Sigmoid colon (tissue), 7 donors: ENCODE measurements at regions of chr11 and their contacts with region 1.

Region 1: DNA sequence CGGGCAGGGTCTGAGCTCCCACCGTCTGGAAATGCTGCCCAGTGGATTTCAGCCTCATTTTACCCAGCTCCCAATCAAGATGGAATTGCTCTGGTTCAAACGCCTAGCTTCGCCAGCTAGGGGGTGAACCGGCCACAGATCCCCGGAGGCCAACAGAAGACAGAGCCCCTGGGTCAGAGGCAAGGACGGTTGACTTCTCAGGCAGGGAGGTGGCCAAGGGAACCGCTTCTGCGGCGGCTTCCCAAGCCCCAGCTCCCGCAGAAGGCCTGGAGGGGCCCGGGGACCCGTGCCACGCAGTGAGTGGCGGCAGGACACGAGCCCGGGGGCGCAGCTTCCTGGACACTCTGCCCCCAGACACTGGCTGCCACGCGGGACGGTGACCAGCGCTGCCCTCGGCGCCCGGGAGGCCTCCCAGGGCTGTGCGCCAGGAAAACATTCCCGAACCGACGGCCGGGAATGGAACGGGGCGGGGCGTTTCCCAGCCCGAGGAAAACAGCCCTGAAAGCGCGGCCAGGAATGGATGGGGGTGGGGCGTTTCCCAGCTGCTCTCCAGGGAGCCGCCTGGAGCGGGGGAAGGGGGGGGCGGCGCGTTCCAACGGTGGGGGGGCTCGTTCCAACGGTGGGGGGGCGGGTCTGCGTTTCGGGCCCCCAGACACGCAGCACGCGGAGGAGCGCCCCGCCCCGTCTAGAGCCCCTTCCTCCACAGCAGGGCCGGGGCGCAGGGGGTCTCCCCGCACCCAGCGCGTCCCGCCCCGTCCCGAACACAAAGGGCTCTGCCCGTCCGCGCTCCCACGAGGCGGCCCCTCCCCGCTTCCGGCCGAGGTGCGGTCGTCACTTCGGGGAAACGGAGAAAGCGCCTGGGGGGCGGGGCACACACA is 13.5 kb upstream of the B4GALNT4 start:
- DNase-seq: peak; percentile 99
- H3K4me3 ChIP-seq: peak overlapping the region; percentile 33 to 48 (median 46)
- H3K27ac ChIP-seq: peak overlapping the region; percentile 98 to 100 (median 100)
- H3K4me1 ChIP-seq: peaks cover 0 to 45% (median 37%) of the 10 kb centered on the region in 4 donors
- H3K27me3 ChIP-seq: peaks cover 0 to 16% (median 4%) of the 10 kb centered on the region in 3 donors
- CTCF ChIP-seq: no peak
- EP300 ChIP-seq: peak in 3 of 4 donors; percentile 70 to 75 (median 75)
- POLR2A ChIP-seq: peak; percentile 19 to 44

Region 2: GRCh38 chr11:250740-251299 is 105.0 kb before region 1 on chr11:
- intact Hi-C with region 1: loop called (anchors 5 kb)
- DNase-seq: peak; percentile 72
- H3K4me3 ChIP-seq: no peak overlapping the region
- H3K27ac ChIP-seq: no peak overlapping the region
- H3K4me1 ChIP-seq: no peaks in the 10 kb centered on the region
- H3K27me3 ChIP-seq: no peaks in the 10 kb centered on the region
- CTCF ChIP-seq: peak; percentile 29 to 58 (median 46)
- EP300 ChIP-seq: no peak
- POLR2A ChIP-seq: no peak

Region 3: GRCh38 chr11:326842-327580 is 28.8 kb before region 1 on chr11:
- intact Hi-C with region 1: loop called (anchors 1 kb)
- DNase-seq: peak; percentile 93
- H3K4me3 ChIP-seq: no peak overlapping the region
- H3K27ac ChIP-seq: peak overlapping the region; percentile 87 to 95 (median 90)
- H3K4me1 ChIP-seq: peaks cover 0 to 58% (median 38%) of the 10 kb centered on the region in 4 donors
- H3K27me3 ChIP-seq: no peaks in the 10 kb centered on the region
- CTCF ChIP-seq: no peak
- EP300 ChIP-seq: no peak
- POLR2A ChIP-seq: no peak